ENCODE measurements at regions of chr22 and their contacts with region 1.

Region 1: DNA sequence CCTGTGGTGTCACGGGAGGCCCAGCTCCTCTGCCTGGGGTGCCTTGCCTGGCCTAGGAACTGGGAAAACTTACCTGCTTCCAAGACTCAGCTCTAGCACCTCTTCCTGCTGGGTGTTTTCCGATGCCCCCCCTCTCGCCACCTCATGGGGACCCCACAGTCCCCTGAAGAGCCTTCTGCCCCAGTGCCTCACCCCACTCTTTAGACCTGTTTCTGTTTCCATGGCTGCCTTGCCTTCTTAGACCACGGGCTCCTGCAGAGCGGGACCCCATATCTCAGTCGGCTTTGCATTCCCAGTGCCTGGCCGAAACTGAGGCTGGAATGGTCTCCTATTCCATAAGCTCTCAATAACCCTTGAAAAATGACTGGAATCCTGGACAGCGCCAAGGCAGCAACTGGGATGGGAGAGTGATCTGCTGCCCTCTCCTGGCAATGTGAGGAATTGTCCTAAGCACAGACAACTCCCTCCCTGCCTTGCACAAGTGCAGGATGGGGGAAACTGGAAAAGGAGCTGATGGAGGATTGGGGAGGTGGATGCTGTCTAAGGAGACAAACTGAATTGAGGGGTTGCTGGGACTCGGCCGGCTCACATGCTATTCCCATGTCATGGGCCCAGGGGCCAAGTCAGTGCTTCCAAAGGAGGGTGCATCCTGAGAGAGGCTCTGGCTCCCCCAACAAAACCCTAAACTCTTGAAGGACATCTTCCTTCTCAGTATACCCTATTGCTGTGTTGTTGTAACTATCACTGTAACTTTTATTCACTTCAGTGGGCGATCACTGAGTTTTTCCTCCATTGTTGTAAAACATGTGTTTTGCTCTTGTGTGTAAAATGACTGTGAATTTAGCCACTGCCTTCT is 26.6 kb upstream of the IL17RA start:
- DNase-seq: peak; percentile 75
- H3K4me3 ChIP-seq: no peak overlapping the region
- H3K27ac ChIP-seq: no peak overlapping the region
- H3K4me1 ChIP-seq: no peaks in the 10 kb centered on the region
- H3K27me3 ChIP-seq: peaks cover 24% of the 10 kb centered on the region
- CTCF ChIP-seq: peak; percentile 91
- EP300 ChIP-seq: no peak
- RAD21 ChIP-seq: peak; percentile 71

Region 2: GRCh38 chr22:16854631-16855030 is 203.6 kb before region 1 on chr22:
- CTCF ChIA-PET with region 1: no interaction called
- POLR2A ChIA-PET with region 1: no interaction called
- DNase-seq: no peak
- H3K4me3 ChIP-seq: no peak overlapping the region
- H3K27ac ChIP-seq: no peak overlapping the region
- H3K4me1 ChIP-seq: no peaks in the 10 kb centered on the region
- H3K27me3 ChIP-seq: peaks cover 7% of the 10 kb centered on the region; the same call in 1 of the 2 replicates
- CTCF ChIP-seq: no peak
- EP300 ChIP-seq: no peak
- RAD21 ChIP-seq: no peak

Region 3: DNA sequence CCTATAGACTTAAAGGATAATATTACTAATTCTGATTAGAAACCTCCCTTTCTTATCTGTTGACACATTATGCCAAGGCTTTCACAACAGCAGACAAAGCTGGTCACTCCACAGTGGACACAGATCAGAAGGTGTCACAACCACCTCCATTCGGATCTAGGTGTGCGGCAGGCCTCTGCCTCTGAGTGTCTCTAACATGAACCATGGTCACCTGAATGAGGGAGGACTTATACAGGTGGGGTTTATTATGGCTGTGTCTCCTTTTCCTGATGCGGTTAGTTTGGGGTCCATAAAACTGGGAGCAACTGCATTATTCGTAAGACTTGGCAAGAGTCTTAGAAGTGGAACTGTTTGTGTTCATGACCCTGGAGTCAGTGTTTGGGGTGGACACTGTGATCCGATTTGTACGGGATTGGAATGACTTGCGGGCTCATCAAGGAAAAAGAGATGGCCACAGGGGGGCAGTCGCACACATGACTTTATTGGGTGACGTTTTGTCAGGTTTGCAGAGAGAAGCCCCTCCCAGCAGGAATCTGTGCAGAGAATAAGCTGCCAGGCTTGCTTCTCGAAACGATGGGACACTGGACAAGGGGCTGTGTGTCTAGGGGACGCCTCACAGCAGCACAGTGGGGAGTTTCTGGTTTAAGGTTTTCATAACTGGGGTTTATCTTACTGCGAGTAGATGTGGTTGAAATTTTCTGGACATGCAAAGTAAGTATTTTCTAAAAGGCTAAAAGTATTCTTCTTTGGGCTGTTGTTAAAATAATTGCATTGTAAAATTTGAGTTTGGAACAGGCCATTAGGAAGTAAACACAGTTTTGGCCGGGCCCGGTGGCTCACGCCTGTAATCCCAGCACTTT is 140.8 kb before region 1 on chr22:
- CTCF ChIA-PET with region 1: interaction called, 27 read pairs
- POLR2A ChIA-PET with region 1: no interaction called
- DNase-seq: peak; percentile 53
- H3K4me3 ChIP-seq: no peak overlapping the region; a peak in 1 of 4 replicates
- H3K27ac ChIP-seq: no peak overlapping the region
- H3K4me1 ChIP-seq: no peaks in the 10 kb centered on the region
- H3K27me3 ChIP-seq: peaks cover 36% of the 10 kb centered on the region; the same call in 1 of the 2 replicates
- CTCF ChIP-seq: peak; percentile 72
- EP300 ChIP-seq: no peak
- RAD21 ChIP-seq: peak; percentile 53

Region 4: DNA sequence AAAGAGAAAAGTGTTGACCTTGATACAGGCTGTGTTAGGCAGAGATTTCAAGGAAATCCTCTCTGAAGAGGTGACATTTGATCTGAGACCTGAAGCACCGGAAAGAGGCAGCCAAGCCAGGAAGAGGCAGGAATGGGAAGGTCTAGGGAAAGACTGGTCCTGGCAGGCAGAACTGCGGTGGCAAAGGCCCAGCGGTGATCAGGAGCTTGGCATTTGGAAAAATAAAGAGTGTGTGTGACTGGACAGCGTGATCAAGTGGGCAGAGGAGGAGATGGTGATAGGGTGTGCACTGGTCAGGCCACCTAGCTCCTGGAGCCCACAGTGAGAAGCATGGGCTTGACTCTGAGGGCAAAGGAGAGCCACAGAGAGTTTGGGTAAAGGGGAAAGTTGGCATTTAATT is 22.9 kb before region 1 on chr22:
- CTCF ChIA-PET with region 1: interaction called, 13 read pairs
- POLR2A ChIA-PET with region 1: no interaction called
- DNase-seq: no peak
- H3K4me3 ChIP-seq: no peak overlapping the region
- H3K27ac ChIP-seq: no peak overlapping the region
- H3K4me1 ChIP-seq: no peaks in the 10 kb centered on the region
- H3K27me3 ChIP-seq: peaks cover 12% of the 10 kb centered on the region; the same call in 1 of the 2 replicates
- CTCF ChIP-seq: no peak
- EP300 ChIP-seq: no peak
- RAD21 ChIP-seq: no peak

Region 5: DNA sequence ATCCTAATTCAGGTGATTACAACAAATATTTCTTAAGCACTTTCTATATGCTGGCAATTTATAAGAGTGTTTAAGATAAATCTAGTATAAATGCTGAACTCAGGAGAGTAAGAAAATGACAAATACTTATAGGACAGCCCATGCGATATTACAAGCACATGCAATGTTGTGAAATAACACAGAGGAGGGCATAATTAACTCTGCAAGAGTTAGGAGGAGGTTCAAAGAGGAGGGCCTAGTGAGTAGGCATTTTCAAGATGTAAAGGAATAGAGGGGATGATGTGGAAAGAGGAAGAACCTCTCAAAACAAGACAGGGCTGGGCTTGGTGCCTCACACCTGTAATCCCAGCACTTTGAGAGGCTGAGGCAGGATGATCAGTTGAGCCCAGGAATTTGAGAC is 10.5 kb before region 1 on chr22:
- CTCF ChIA-PET with region 1: interaction called, 12 read pairs
- POLR2A ChIA-PET with region 1: no interaction called
- DNase-seq: no peak
- H3K4me3 ChIP-seq: no peak overlapping the region
- H3K27ac ChIP-seq: no peak overlapping the region
- H3K4me1 ChIP-seq: no peaks in the 10 kb centered on the region
- H3K27me3 ChIP-seq: peaks cover 5% of the 10 kb centered on the region; the same call in 1 of the 2 replicates
- CTCF ChIP-seq: no peak
- EP300 ChIP-seq: no peak
- RAD21 ChIP-seq: no peak

Region 6: DNA sequence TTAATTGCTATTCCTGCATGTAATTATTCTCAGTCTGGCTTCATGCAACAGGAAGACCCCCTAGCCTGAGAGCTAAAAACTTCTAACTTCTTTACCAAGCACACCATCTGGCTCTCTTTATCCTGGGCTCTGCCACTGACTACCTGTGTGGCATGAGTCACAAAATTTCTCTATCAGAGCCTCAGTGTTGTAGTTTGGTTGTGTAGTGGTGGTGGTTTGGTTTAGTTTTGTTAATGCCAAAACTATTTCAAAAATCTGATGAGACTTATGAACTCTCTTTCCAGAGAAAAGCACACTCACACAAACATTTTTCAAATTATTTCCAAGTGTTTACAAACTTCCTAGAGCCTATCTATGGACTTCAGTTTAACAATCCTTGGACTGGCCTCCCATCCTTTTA is 19.1 kb after region 1 on chr22:
- CTCF ChIA-PET with region 1: interaction called, 18 read pairs
- POLR2A ChIA-PET with region 1: no interaction called
- DNase-seq: no peak
- H3K4me3 ChIP-seq: no peak overlapping the region
- H3K27ac ChIP-seq: peak overlapping the region in 1 of 2 experiments; percentile 45; a peak in 1 of 4 replicates
- H3K4me1 ChIP-seq: no peaks in the 10 kb centered on the region
- H3K27me3 ChIP-seq: peaks cover 5% of the 10 kb centered on the region
- CTCF ChIP-seq: no peak
- EP300 ChIP-seq: peak in 1 of 2 experiments; percentile 20; a peak in 1 of 4 replicates
- RAD21 ChIP-seq: no peak

Region 7: DNA sequence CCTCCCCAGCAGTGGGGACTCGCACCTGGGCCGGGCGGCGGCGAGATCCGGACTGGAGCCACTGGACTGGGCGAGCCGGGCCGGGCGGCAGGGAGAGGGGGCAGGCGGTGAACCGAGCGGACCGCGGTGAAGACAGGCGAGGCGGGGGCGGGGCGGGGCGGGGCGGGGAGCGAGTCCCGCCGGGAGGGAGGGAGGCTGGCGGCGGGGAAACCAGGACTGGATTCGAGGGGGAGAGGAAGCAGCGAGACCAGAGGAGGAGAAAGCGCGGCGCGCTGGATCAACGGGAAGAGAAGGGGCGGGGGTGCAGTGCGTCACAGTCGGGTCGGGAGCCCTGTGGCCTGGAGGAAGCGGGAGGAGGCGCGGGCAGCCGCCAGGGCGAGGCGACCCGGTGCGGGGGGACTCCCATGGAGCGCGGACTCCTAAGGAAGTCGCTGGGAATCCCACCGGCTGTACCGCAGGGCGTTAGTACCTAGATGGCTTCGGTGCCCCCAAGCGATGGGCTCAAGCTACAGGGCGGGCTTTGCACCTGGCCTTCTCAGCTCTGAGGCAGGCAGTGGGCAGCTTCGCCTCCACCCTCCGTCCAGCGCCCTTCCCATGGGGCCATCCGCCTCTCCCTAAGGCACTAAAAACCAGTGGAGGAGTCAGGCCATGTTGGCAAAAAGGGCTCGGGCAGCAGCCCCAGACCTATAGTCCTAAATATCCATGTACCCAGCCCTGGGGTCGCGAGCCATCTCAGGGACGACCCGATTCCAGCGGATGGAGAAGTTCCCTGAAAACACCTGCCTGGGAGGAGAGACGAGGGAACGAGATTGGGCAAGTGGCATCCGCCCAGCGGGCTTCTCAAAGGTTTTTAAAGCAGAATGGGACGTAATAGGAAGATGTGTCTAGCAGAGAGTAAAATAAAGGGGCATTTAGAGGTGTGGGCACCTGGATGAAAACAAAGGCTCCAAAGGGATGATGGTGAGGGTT is 63.3 kb after region 1 on chr22 and contains the start of gene TMEM121B:
- CTCF ChIA-PET with region 1: interaction called, 11 read pairs
- POLR2A ChIA-PET with region 1: no interaction called
- DNase-seq: peak; percentile 95
- H3K4me3 ChIP-seq: peak within 1 kb of the TSS; percentile 49 to 57
- H3K27ac ChIP-seq: peak within 1 kb of the TSS in 1 of 2 experiments; percentile 50; a peak in 1 of 4 replicates
- H3K4me1 ChIP-seq: peaks cover 0 to 5% of the 10 kb centered on the region in 2 experiments; a peak in 1 of 4 replicates
- H3K27me3 ChIP-seq: peaks cover 9% of the 10 kb centered on the region; the same call in 1 of the 2 replicates
- CTCF ChIP-seq: no peak
- EP300 ChIP-seq: no peak
- RAD21 ChIP-seq: no peak
- polyA plus RNA-seq, gene TMEM121B: 0.08 and 0.13 TPM in 2 replicates

Region 8: GRCh38 chr22:17501679-17502285 is 443.6 kb after region 1 on chr22:
- CTCF ChIA-PET with region 1: interaction called, 12 read pairs
- POLR2A ChIA-PET with region 1: no interaction called
- DNase-seq: peak; percentile 69
- H3K4me3 ChIP-seq: no peak overlapping the region; a peak in 1 of 4 replicates
- H3K27ac ChIP-seq: no peak overlapping the region
- H3K4me1 ChIP-seq: no peaks in the 10 kb centered on the region
- H3K27me3 ChIP-seq: peaks cover 61% of the 10 kb centered on the region
- CTCF ChIP-seq: peak; percentile 79
- EP300 ChIP-seq: no peak
- RAD21 ChIP-seq: peak; percentile 87